ENCODE measurements at regions of chr20 and their contacts with region 1.

Region 1: DNA sequence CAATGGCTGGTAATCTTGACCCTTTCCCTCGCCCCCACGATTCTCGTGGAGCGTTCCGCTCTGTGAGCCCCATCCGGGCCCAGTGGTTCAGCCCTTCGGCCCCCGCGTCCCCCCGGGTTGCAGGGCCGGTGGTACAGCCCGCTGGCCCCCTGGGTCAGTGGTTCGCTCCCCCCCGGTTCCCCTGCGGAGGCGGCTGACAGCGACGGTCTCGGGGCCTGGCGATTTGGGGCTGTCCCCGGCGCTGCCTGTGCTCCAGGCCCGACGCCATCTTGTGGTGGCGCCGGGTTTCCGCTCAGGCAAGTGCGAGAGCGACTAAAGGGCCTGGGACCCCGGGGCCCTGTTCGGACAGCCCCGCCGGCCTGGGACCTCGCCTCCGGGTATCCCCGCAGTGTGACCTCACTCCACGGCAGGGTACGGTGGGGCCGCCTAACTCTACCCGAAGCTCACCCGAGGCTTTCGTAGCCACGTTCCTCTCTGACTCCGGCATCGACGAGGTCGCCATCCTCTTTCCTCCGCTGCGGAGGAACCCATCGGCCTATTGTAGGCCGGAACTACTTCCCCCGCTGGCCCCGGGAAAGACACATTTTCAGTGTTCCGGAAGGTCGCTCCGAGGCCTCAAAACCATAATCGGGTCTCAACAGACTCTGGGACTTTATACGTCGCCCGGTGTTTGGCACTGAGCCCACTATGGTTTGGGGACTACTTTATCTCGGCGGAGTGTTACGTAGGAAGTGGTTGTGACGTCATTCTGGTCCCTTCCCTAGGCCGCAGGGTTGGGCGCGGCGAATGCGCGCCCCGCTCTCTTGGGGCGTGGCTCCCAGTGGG is at the start of gene ZNF335:
- H3K4me3 ChIP-seq: peak within 1 kb of the TSS; percentile 90
- H3K27ac ChIP-seq: peak within 1 kb of the TSS; percentile 92
- H3K4me1 ChIP-seq: no peaks in the 10 kb centered on the region
- CTCF ChIP-seq: peak; percentile 44; the same call in 1 of the 2 replicates

Region 2: GRCh38 chr20:45953672-45954071 is 18.2 kb before region 1 on chr20:
- CTCF ChIA-PET with region 1: interaction called, 16 read pairs
- POLR2A ChIA-PET with region 1: interaction called, 6 read pairs
- H3K4me3 ChIP-seq: no peak overlapping the region
- H3K27ac ChIP-seq: no peak overlapping the region
- H3K4me1 ChIP-seq: no peaks in the 10 kb centered on the region
- CTCF ChIP-seq: no peak

Region 3: DNA sequence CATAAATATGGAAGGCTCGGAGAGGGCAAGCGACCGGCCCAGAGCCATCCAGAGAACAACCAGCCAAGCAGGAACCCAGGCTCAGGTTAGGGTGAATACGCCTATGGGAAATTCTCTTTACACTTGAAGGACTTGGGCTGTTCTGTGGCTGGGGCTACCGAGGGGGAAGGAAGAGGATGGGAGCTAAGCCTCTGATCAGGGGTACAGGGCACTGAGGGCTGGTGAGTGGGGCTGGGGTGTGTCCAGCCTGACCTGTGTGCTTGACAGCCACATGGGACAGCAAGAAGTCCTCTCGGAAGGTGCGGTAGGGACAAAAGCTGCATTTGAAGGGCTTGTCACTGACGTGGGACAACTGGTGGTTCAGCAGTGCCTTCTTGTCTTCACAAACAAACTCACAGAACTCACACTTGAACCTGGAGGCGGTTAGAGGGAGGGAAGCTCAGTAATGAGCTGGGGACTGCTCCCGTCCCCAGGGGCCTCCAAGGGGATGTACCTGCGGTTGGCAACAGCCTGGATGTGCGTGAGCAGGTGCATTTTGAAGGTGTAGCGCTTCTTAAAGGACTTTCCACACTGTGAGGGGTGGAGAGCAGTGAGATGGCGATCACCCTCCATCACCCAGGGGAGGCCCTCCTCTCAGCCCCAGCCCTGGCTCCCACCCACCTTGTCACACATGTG is 11.8 kb before region 1 on chr20:
- CTCF ChIA-PET with region 1: interaction called, 26 read pairs
- POLR2A ChIA-PET with region 1: interaction called, 5 read pairs
- H3K4me3 ChIP-seq: no peak overlapping the region
- H3K27ac ChIP-seq: no peak overlapping the region
- H3K4me1 ChIP-seq: no peaks in the 10 kb centered on the region
- CTCF ChIP-seq: no peak

Region 4: GRCh38 chr20:45987108-45987780 is 15.4 kb after region 1 on chr20:
- CTCF ChIA-PET with region 1: interaction called, 37 read pairs
- POLR2A ChIA-PET with region 1: interaction called, 4 read pairs
- H3K4me3 ChIP-seq: no peak overlapping the region
- H3K27ac ChIP-seq: no peak overlapping the region
- H3K4me1 ChIP-seq: no peaks in the 10 kb centered on the region
- CTCF ChIP-seq: peak; percentile 76

Region 5: GRCh38 chr20:46416421-46416820 is 444.5 kb after region 1 on chr20:
- CTCF ChIA-PET with region 1: no interaction called
- POLR2A ChIA-PET with region 1: no interaction called
- H3K4me3 ChIP-seq: no peak overlapping the region
- H3K27ac ChIP-seq: no peak overlapping the region
- H3K4me1 ChIP-seq: no peaks in the 10 kb centered on the region
- CTCF ChIP-seq: no peak

Measured in HEK293 (cell line).